Heart left ventricle (tissue), 16 donors: ENCODE measurements at regions of chr7 and their contacts with region 1.

Region 1: GRCh38 chr7:116741625-116742316 is 69.8 kb downstream of the MET start:
- DNase-seq: no peak
- ATAC-seq: no peak
- H3K4me3 ChIP-seq: no peak overlapping the region
- H3K27ac ChIP-seq: no peak overlapping the region
- H3K4me1 ChIP-seq: no peaks in the 10 kb centered on the region
- H3K27me3 ChIP-seq: no peaks in the 10 kb centered on the region
- CTCF ChIP-seq: no peak
- POLR2A ChIP-seq: no peak

Region 2: DNA sequence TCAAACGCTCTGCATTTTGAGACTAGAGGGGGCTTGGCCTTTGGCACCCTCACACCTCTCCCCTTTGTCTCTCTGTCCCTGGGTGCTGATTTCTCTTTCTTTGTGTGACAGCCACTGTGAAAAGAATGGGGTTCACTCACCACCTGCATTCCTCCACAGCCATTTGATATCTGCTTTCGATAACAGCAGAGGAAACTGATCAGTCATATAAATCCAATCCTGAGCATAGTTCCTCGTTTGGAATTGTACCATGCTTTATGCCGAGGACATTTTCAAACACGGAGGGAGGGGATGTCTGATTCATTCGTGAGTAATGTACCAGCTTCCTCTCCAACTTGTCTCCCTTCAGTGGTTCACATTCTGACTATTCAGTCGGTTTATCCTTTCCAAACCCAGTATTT is 54.0 kb before region 1 on chr7:
- intact Hi-C with region 1: no loop called
- DNase-seq: no peak
- ATAC-seq: no peak
- H3K4me3 ChIP-seq: no peak overlapping the region
- H3K27ac ChIP-seq: no peak overlapping the region
- H3K4me1 ChIP-seq: peaks cover 0 to 4% (median 0%) of the 10 kb centered on the region in 12 donors
- H3K27me3 ChIP-seq: no peaks in the 10 kb centered on the region
- CTCF ChIP-seq: no peak
- POLR2A ChIP-seq: no peak

Region 3: GRCh38 chr7:116776610-116777289 is 35.0 kb after region 1 on chr7:
- intact Hi-C with region 1: loop called in 1 of 10 experiments (anchors 5 kb)
- DNase-seq: no peak
- ATAC-seq: peak in 1 of 4 donors; percentile 28
- H3K4me3 ChIP-seq: no peak overlapping the region
- H3K27ac ChIP-seq: peak overlapping the region in 1 of 12 donors; percentile 12
- H3K4me1 ChIP-seq: peaks cover 0 to 12% (median 1%) of the 10 kb centered on the region in 12 donors
- H3K27me3 ChIP-seq: no peaks in the 10 kb centered on the region
- CTCF ChIP-seq: no peak
- POLR2A ChIP-seq: no peak

Region 4: DNA sequence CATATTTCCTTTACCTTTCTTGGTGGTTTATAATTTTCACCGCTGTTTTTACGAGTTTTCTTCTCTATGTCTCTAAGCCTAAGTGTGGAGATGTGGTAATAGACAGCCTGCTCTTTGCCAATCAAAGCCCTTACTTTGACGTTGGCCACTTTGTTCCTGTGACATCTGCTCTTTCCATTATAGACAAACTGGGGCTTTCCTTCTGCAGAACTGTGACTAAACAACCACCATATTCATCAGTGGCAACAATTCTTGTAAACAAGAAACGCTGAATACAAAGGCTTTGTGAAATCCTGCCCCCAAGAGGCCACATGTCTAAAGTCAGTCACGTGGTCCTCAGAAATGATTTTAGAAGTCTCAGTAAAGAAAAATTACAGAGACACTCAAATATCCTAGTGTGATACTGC is 61.0 kb after region 1 on chr7:
- intact Hi-C with region 1: no loop called
- DNase-seq: no peak
- ATAC-seq: peak in 1 of 4 donors; percentile 22
- H3K4me3 ChIP-seq: no peak overlapping the region
- H3K27ac ChIP-seq: no peak overlapping the region
- H3K4me1 ChIP-seq: peaks cover 0 to 15% (median 5%) of the 10 kb centered on the region in 12 donors
- H3K27me3 ChIP-seq: no peaks in the 10 kb centered on the region
- CTCF ChIP-seq: peak in 10 of 12 donors; percentile 11 to 59 (median 38)
- POLR2A ChIP-seq: no peak